ENCODE measurements at regions of chr16 and their contacts with region 1.

Region 1: GRCh38 chr16:23999663-24000062 is 163.9 kb downstream of the PRKCB start:
- DNase-seq: peak; percentile 89
- H3K4me3 Mint-ChIP-seq: no peak overlapping the region
- H3K27ac Mint-ChIP-seq: peak overlapping the region; percentile 18
- H3K4me1 Mint-ChIP-seq: peaks cover 20% of the 10 kb centered on the region
- H3K27me3 Mint-ChIP-seq: no peaks in the 10 kb centered on the region

Region 2: DNA sequence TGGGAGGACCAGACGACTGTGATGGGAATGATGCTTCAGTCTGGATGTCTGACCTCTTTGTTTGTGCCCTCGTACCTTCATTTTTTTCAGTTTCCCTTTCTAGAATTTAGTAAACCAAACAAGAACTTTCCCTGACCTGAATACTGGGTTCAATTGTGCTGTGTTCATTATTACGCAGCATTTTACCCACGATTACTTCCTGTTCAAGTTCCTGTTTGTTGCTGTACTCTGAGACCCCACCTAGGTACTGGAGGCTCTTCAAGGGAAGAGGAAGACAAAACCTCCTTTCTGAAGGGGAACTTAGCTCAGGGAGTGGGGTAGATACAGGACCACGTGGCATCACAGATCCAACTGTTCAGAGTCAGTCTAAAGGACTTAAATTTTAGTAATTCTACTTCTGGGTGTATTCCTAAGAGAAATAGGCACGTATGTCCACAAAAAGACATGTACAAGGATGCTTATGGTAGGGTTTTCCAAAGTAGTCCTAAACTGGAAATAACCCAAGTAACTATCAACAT is 173.1 kb before region 1 on chr16:
- CTCF ChIA-PET with region 1: no interaction called
- POLR2A ChIA-PET with region 1: no interaction called
- intact Hi-C with region 1: loop called (anchors 1 kb)
- DNase-seq: no peak
- H3K4me3 Mint-ChIP-seq: peak overlapping the region; percentile 43
- H3K27ac Mint-ChIP-seq: peak overlapping the region; percentile 62
- H3K4me1 Mint-ChIP-seq: peaks cover 20% of the 10 kb centered on the region
- H3K27me3 Mint-ChIP-seq: no peaks in the 10 kb centered on the region

Region 3: GRCh38 chr16:23869052-23869451 is 130.6 kb before region 1 on chr16:
- CTCF ChIA-PET with region 1: no interaction called
- POLR2A ChIA-PET with region 1: interaction called, 3 read pairs
- intact Hi-C with region 1: loop called (anchors 5 kb)
- DNase-seq: peak; percentile 64
- H3K4me3 Mint-ChIP-seq: no peak overlapping the region
- H3K27ac Mint-ChIP-seq: peak overlapping the region; percentile 44
- H3K4me1 Mint-ChIP-seq: peaks cover 56% of the 10 kb centered on the region
- H3K27me3 Mint-ChIP-seq: no peaks in the 10 kb centered on the region

Region 4: DNA sequence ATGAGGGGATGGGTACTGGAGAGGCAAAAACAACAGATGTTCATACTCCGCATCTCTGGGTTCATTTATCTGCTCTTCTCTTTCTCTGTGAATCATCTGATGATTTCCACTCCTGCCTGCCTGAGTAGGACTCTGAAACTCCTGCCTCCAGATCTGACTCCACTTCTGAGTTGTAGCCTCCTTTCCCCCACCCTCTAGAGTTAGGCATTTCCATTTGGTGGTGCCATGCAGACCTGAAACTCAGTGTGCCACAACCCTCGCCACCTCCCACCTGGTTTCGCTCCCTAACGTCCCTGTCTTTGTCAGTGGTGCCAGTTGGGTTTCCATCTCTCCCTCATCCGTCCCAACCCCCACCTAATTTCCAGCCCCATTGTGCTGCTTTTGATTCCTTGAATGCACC is 37.7 kb before region 1 on chr16:
- CTCF ChIA-PET with region 1: no interaction called
- POLR2A ChIA-PET with region 1: interaction called, 4 read pairs
- intact Hi-C with region 1: loop called (anchors 1 kb)
- DNase-seq: peak; percentile 84
- H3K4me3 Mint-ChIP-seq: peak overlapping the region; percentile 34
- H3K27ac Mint-ChIP-seq: peak overlapping the region; percentile 47
- H3K4me1 Mint-ChIP-seq: peaks cover 67% of the 10 kb centered on the region
- H3K27me3 Mint-ChIP-seq: no peaks in the 10 kb centered on the region

Region 5: GRCh38 chr16:23987443-23987842 is 12.2 kb before region 1 on chr16:
- CTCF ChIA-PET with region 1: no interaction called
- POLR2A ChIA-PET with region 1: no interaction called
- intact Hi-C with region 1: no loop called
- DNase-seq: no peak
- H3K4me3 Mint-ChIP-seq: no peak overlapping the region
- H3K27ac Mint-ChIP-seq: no peak overlapping the region
- H3K4me1 Mint-ChIP-seq: peaks cover 3% of the 10 kb centered on the region
- H3K27me3 Mint-ChIP-seq: no peaks in the 10 kb centered on the region

Region 6: GRCh38 chr16:24023621-24024020 is 24.0 kb after region 1 on chr16:
- CTCF ChIA-PET with region 1: no interaction called
- POLR2A ChIA-PET with region 1: no interaction called
- intact Hi-C with region 1: no loop called
- DNase-seq: no peak
- H3K4me3 Mint-ChIP-seq: no peak overlapping the region
- H3K27ac Mint-ChIP-seq: no peak overlapping the region
- H3K4me1 Mint-ChIP-seq: peaks cover 13% of the 10 kb centered on the region
- H3K27me3 Mint-ChIP-seq: no peaks in the 10 kb centered on the region

Measured in activated CD4-positive, alpha-beta memory T cell treated with anti-CD3 and anti-CD28 coated beads for 36 hours (primary cell).